Activated CD8-positive, alpha-beta T cell treated with anti-CD3 and anti-CD28 coated beads for 36 hours (primary cell): ENCODE measurements at regions of chr4 and their contacts with region 1.

Region 1: DNA sequence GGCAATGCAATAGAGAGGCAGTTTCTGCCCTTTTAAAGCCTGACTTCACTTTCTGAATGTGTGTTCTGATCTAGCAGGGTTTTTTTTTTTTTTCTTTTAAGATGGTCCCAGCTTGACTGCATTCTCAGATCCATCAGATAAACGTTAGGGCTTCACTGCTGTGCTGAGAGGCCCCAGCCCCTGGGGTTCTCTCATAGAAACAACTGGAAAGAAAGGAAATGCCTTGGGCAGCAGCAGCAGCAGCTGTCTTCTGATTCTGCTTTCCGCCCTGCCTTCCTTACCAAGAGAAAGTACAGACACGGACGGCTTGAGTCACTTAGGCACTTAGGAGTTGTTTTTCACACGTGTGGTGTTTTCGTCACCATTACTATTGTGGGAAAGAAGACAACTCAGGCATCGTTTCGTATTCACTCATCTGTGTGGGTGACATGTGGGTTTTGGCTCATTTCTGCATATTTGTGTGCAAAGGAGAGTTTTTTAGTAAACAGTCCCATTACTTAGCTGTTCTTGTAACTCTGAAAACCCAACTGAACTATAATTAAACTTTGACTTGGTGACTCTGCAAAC is 172.0 kb downstream of the PTTG2 start:
- DNase-seq: peak; percentile 90
- ATAC-seq: peak; percentile 64
- H3K4me3 Mint-ChIP-seq: peak overlapping the region; percentile 53
- H3K27ac Mint-ChIP-seq: peak overlapping the region; percentile 87
- H3K4me1 Mint-ChIP-seq: peaks cover 62% of the 10 kb centered on the region
- H3K27me3 Mint-ChIP-seq: no peaks in the 10 kb centered on the region
- CTCF ChIP-seq: no peak

Region 2: DNA sequence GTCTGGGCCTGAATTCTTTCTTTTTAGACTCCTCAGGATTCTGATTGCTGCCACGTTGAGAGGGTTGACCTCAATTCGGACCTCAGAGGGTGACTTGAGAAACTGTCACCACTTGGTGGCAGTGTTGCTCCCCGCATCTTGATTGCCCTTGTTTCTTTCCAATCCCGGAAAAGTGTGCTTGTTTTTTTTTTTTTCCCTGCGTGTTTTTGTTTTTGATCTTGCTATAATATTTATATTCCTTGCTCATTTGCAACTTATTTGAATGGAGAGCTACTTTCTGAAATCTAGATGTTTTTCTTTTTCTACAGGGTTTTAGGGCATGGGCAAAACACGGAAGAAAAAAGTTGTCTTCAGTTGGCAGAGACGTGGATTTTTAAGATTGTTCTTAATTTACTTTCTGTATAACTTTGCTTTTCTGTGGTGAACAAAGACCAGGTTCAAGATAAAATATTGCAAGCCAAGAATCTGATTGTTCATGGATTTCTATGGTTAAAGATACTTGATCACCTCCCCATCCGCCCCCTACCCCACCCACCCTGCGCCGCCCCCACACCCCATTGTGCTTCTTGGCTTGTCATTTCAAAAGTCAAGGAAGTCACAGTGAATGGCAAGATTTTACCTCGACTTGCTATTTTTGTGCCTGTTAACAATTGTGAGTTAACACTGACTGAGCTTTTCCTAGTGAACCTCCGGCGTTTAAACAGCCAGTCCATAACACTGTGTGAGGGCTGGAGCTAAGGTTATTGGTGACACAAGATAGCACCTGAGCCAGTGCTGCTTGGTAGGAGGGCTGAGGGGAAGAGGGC is 69.9 kb before region 1 on chr4:
- CTCF ChIA-PET with region 1: interaction called, 4 read pairs
- POLR2A ChIA-PET with region 1: no interaction called
- intact Hi-C with region 1: loop called (anchors 5 kb)
- DNase-seq: peak; percentile 78
- ATAC-seq: peak; percentile 62
- H3K4me3 Mint-ChIP-seq: peak overlapping the region; percentile 60
- H3K27ac Mint-ChIP-seq: peak overlapping the region; percentile 73
- H3K4me1 Mint-ChIP-seq: peaks cover 13% of the 10 kb centered on the region
- H3K27me3 Mint-ChIP-seq: no peaks in the 10 kb centered on the region
- CTCF ChIP-seq: peak; percentile 97

Region 3: GRCh38 chr4:38160487-38161207 is 28.5 kb after region 1 on chr4:
- CTCF ChIA-PET with region 1: interaction called, 8 read pairs
- POLR2A ChIA-PET with region 1: interaction called, 20 read pairs
- intact Hi-C with region 1: loop called (anchors 1 kb)
- DNase-seq: peak; percentile 68
- ATAC-seq: peak; percentile 72
- H3K4me3 Mint-ChIP-seq: no peak overlapping the region
- H3K27ac Mint-ChIP-seq: peak overlapping the region; percentile 59
- H3K4me1 Mint-ChIP-seq: peaks cover 60% of the 10 kb centered on the region
- H3K27me3 Mint-ChIP-seq: no peaks in the 10 kb centered on the region
- CTCF ChIP-seq: no peak

Region 4: DNA sequence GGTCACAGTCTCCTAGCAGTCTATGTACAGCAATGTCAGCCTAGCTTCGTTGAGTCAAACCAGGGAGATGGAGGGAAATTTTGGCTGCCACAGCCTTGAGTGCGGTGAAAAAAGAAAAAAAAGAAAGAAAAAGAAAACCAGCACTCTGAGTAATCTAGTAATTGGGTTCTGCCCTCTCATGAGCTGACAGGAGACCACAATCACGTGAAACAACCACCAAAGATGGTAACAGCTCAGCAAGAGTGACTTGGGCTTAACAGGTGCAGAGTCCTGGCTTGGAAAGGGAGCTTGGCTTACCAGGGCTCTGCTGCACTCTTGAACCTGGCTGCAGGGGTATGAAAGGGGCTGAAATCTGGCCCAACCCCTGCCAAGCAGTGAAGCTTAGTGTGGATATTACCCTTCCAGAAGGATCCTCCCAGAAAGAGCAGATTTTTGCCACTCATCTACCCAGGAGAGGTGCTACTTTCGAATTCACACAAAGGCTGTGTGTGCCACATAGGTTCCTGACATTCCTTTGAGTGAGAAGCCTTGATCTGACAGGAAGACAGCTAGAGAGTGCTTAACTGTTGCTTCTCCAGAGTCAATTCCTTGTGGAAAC is 178.4 kb after region 1 on chr4:
- CTCF ChIA-PET with region 1: interaction called, 3 read pairs
- POLR2A ChIA-PET with region 1: interaction called, 8 read pairs
- intact Hi-C with region 1: loop called (anchors 5 kb)
- DNase-seq: peak; percentile 90
- ATAC-seq: peak; percentile 81
- H3K4me3 Mint-ChIP-seq: peak overlapping the region; percentile 34
- H3K27ac Mint-ChIP-seq: peak overlapping the region; percentile 81
- H3K4me1 Mint-ChIP-seq: peaks cover 68% of the 10 kb centered on the region
- H3K27me3 Mint-ChIP-seq: peaks cover 3% of the 10 kb centered on the region
- CTCF ChIP-seq: no peak